Right ventricle myocardium superior (tissue), 1 donor: ENCODE measurements at regions of chr12 and their contacts with region 1.

Region 1: GRCh38 chr12:92649511-92650227 is 53.1 kb upstream of the PLEKHG7 start:
- DNase-seq: no peak
- ATAC-seq: peak; percentile 91

Region 2: DNA sequence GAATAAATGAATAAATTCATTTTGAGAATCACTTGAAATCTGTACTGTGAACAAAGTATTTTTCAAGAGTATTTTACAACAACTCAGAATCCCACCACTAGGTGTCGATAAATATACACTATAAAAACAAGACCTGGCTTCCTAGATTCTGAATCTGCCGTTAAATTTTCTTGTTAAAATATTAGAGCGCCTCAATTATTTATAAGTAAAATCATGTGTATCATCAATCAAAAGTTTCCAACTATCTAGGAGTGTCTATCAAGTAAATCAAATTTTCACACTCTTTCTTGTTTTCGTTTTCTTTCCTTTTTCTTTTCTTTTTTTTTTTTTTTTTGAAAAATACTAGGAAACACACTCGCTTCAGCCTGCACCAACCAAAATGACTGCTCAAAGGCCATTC is 1287.8 kb before region 1 on chr12:
- intact Hi-C with region 1: loop called (anchors 5 kb)
- DNase-seq: no peak
- ATAC-seq: peak; percentile 63

Region 3: GRCh38 chr12:92690601-92691000 is 40.9 kb after region 1 on chr12:
- intact Hi-C with region 1: no loop called
- DNase-seq: no peak
- ATAC-seq: no peak